Naive thymus-derived CD8-positive, alpha-beta T cell (primary cell): ENCODE measurements at regions of chr12 and their contacts with region 1.

Region 1: DNA sequence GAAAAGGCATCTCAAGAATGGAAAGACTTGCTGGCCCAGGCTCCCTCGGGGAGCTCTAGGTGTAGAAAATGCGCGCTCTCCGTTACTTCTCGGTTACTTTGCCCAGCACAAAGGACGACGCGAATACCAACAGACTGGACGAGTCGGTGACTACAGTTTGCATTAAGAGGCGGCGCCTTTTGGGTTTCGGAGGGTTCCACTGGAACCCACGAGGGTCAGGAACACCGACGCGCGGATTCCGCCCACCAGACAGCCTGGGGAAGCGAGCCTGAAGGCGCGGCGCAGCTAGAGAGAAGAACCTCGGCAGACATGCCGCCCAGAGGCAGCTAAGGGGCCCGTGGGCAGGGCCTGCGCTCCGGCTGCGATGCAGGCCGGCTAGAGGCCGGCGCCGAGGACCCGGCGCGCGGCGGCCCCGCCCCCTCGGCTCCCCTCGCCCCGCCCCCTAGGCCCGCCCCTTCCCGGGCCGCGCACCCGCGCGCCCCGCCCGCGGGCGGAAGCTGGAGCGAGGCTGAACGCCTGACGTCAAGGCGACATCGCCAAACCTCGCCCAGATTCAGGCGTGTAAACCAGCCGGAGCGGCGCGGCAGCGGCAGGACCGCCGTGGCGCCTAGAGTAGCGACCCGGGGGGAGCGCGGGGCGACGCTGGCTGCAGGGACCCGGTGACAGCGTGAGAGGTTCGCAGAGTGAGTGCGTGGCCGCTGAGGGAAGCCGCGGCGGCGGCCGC is at the start of gene RAP1B:
- DNase-seq: peak; percentile 83 to 94 (median 89)
- ATAC-seq: peak; percentile 79 to 82
- H3K4me3 Mint-ChIP-seq: peak within 1 kb of the TSS; percentile 95 to 99 (median 98)
- H3K27ac Mint-ChIP-seq: peak within 1 kb of the TSS; percentile 97 to 99 (median 98)
- H3K4me1 Mint-ChIP-seq: peaks cover 22 to 52% (median 46%) of the 10 kb centered on the region in 4 donors
- H3K27me3 Mint-ChIP-seq: no peaks in the 10 kb centered on the region
- polyA plus RNA-seq, gene RAP1B: 562 to 708 (median 574) TPM

Region 2: DNA sequence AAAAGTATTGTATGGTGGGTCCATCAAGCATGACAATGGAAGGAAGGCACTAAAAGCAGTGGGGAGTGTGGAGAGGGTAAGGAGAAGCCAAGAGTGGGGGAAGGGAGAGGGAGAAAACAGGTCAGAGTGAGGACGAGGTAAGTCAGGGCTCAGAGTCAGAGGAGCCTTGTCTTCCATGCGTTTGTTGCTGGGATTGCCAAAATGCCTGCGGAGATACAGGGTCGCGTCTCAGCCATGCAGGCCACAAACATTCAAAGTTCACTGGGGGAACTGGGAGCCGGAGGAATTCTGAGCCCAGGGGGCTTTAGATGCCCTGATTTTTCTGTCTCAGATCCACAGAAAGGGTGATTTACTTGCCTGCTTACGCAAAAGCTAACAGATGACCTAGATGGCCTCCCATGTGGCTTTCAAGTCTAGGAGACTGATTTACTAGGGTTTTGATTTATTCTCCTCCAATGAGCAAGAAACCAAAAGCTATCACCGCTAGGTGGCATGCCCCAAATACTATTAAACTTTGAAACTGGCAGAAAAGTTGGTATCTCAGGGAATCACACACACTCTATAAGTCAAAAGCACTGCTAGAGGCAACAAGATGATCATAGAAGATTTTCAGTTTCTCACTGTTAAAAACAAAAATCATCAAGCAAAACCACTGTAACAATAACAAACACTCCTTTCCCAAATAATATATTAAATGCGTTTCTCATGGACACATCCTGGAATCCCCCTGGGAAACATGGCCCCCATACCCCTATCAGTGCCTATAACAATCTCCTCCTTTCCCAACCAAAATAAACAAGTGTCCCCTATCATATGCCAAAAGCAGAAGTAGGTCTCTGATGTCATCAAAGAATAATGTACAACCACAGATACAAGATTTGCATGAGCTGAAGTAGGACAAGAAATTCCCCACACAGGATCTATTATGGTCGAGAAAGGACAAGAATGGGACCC is 251.7 kb before region 1 on chr12:
- POLR2A ChIA-PET with region 1: interaction called, 28 read pairs
- DNase-seq: peak; percentile 15 to 83 (median 70)
- ATAC-seq: peak; percentile 90 to 94
- H3K4me3 Mint-ChIP-seq: peak overlapping the region in 2 of 10 donors; percentile 6 to 12
- H3K27ac Mint-ChIP-seq: peak overlapping the region in 6 of 10 donors; percentile 2 to 59 (median 31)
- H3K4me1 Mint-ChIP-seq: peaks cover 22 to 39% (median 31%) of the 10 kb centered on the region in 4 donors
- H3K27me3 Mint-ChIP-seq: no peaks in the 10 kb centered on the region

Region 3: GRCh38 chr12:68497702-68498101 is 112.8 kb before region 1 on chr12:
- POLR2A ChIA-PET with region 1: no interaction called
- DNase-seq: no peak
- ATAC-seq: no peak
- H3K4me3 Mint-ChIP-seq: peak overlapping the region in 2 of 10 donors; percentile 50 to 59
- H3K27ac Mint-ChIP-seq: peak overlapping the region in 1 of 10 donors; percentile 15
- H3K4me1 Mint-ChIP-seq: peaks cover 0 to 17% (median 7%) of the 10 kb centered on the region in 4 donors
- H3K27me3 Mint-ChIP-seq: no peaks in the 10 kb centered on the region

Region 4: DNA sequence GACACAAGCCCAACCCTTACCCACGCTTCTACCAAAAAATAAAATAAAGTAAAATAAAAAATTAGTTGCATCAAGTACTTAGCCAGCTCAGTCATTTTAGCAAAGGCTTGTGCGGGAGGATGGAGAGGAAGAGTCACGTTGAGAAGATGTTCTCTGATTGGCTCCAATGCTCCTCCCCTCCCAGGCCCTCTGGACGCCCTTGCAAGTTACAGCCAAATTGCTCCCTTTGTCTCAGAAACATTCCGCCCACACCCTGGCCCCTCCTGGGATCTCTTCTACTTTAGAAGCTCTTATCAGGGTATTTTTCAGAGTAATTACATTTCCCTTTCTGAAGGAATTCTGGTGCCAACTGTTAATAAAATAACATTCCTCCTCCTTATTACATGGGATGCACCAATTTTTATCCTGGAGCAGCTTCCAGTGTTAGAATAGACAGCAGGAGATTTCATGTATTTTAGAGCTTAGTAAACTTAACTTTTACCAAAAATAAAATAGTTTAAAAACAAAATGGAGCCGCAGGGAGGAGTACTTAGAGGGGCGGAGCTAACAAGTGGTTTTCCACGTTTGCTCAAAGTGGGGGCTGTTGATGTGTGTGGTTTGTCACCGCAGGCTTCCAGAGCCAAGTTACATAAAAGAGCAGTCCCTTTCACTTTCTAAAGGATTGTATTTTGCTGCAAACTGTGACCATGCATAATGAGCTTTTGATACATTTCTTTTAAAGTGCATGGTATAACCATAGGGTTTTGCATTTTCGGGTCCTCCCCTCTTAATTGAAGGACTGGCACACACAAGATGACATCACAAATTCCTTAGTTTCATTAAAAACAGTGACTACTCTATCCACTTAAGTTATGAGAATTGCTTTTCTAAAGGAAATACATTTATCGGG is 71.6 kb before region 1 on chr12:
- POLR2A ChIA-PET with region 1: interaction called, 93 read pairs
- DNase-seq: peak; percentile 15 to 88 (median 66)
- ATAC-seq: peak; percentile 92 to 98
- H3K4me3 Mint-ChIP-seq: peak overlapping the region; percentile 58 to 84 (median 73)
- H3K27ac Mint-ChIP-seq: peak overlapping the region; percentile 84 to 96 (median 92)
- H3K4me1 Mint-ChIP-seq: peaks cover 20 to 63% (median 55%) of the 10 kb centered on the region in 4 donors
- H3K27me3 Mint-ChIP-seq: no peaks in the 10 kb centered on the region

Region 5: DNA sequence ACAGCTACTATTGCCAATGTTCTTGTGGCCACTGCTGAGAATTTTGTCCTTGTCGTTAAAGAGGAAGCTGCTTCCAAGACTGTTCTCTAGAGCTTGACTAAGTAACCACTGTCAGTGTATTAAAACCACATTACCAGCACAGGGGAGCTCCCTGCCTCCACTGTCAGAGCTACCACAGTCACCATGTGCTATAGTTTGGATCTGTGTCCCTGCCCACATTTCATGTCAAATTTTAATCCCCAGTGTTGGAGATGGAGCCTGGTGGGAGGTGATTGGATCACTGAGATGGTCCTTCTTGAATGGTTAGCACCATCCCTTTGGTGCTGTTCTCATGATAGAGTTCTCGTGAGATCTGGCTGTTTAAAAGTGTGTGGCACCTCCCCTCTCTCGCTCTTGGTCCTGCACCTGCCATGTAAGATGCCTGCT is 23.1 kb before region 1 on chr12:
- POLR2A ChIA-PET with region 1: interaction called, 129 read pairs
- DNase-seq: peak in 9 of 10 donors; percentile 17 to 74 (median 44)
- ATAC-seq: peak; percentile 72 to 79
- H3K4me3 Mint-ChIP-seq: peak overlapping the region; percentile 34 to 75 (median 65)
- H3K27ac Mint-ChIP-seq: peak overlapping the region; percentile 60 to 95 (median 92)
- H3K4me1 Mint-ChIP-seq: peaks cover 28 to 75% (median 68%) of the 10 kb centered on the region in 4 donors
- H3K27me3 Mint-ChIP-seq: no peaks in the 10 kb centered on the region

Region 6: DNA sequence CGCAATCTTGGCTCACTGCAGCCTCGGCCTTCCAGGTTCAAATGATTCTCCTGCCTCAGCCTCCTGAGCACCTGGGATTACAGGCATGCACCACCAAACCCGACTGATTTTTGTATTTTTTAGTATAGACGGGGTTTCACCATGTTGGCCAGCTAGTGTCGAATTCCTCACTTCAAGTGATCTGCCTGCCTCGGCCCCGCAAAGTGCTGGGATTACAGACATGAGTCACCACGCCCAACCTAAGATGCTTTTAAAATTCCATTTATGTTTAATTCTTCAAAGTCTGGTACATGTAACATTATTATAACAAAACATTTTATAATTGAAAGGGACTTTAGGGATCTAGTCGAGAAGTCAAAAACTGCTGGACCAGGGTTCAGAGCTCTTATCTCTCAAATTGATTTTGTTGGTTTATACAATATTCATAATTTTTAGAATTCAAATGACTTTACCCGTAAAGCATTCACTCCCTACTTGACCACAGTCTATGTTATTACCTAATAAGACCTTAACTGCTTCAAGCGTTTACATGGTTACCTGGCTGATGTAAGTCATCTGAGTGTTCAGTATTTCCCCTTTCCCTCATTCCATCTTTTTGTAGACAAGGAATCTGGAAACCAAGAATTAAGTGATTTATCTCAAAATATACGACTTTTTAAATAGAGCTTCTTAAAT is 28.3 kb after region 1 on chr12:
- POLR2A ChIA-PET with region 1: interaction called, 11 read pairs
- DNase-seq: no peak
- ATAC-seq: no peak
- H3K4me3 Mint-ChIP-seq: peak overlapping the region; percentile 31 to 80 (median 72)
- H3K27ac Mint-ChIP-seq: peak overlapping the region; percentile 66 to 93 (median 82)
- H3K4me1 Mint-ChIP-seq: peaks cover 28 to 97% (median 77%) of the 10 kb centered on the region in 4 donors
- H3K27me3 Mint-ChIP-seq: no peaks in the 10 kb centered on the region

Region 7: DNA sequence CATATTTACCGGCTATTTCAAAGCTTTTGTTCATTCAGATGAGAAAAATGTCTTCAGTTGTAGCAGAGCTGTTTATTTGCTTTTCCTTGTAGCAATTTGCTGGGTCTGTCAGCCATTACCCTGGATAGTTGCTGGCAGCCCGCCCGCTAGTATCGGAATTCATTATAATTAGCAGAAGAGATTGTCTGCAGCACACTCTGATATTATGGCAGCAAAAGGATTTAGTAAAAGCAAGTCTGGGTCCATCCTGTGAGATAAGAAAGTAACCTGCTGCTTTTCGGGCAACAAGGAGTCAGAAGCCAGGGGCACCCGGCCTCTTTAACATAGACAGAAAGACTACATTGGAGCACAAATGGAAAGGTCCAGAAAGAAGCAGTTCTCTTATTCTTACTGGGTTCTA is 129.4 kb after region 1 on chr12:
- POLR2A ChIA-PET with region 1: no interaction called
- DNase-seq: no peak
- ATAC-seq: no peak
- H3K4me3 Mint-ChIP-seq: no peak overlapping the region
- H3K27ac Mint-ChIP-seq: peak overlapping the region in 2 of 10 donors; percentile 8 to 26
- H3K4me1 Mint-ChIP-seq: peaks cover 0 to 10% (median 5%) of the 10 kb centered on the region in 4 donors
- H3K27me3 Mint-ChIP-seq: no peaks in the 10 kb centered on the region